GM23248 (cell line): ENCODE measurements at regions of chr11 and their contacts with region 1.

Region 1: DNA sequence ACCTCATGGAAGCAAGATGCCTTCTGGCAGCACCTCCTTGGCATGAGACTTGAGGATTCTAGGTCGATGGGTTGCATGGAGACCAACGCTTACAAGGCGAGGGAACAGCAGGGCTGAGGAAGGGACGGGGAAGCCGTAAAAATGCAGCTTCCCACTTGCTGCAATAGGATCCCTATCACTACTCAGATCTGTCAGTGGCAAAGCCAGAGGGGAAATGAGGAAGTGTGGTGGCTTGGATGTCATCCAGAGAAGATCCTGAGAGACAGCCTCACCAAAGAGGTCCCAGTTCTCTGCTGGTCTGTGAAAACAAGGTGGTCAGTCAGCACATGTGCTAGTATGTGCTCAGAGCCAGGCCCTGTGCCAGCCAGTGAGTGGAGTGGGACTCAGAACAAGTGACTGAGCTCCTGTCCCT is 22.2 kb downstream of the CYB5R2 start:
- DNase-seq: peak; percentile 47
- H3K4me3 ChIP-seq: no peak overlapping the region
- H3K27ac ChIP-seq: no peak overlapping the region
- H3K4me1 ChIP-seq: no peaks in the 10 kb centered on the region
- H3K27me3 ChIP-seq: no peaks in the 10 kb centered on the region

Region 2: GRCh38 chr11:7571640-7572000 is 79.5 kb before region 1 on chr11:
- in situ Hi-C with region 1: loop called (anchors 5 kb)
- DNase-seq: peak; percentile 83
- H3K4me3 ChIP-seq: no peak overlapping the region
- H3K27ac ChIP-seq: no peak overlapping the region
- H3K4me1 ChIP-seq: peaks cover 34% of the 10 kb centered on the region
- H3K27me3 ChIP-seq: no peaks in the 10 kb centered on the region